ENCODE measurements at regions of chr12 and their contacts with region 1.

Region 1: DNA sequence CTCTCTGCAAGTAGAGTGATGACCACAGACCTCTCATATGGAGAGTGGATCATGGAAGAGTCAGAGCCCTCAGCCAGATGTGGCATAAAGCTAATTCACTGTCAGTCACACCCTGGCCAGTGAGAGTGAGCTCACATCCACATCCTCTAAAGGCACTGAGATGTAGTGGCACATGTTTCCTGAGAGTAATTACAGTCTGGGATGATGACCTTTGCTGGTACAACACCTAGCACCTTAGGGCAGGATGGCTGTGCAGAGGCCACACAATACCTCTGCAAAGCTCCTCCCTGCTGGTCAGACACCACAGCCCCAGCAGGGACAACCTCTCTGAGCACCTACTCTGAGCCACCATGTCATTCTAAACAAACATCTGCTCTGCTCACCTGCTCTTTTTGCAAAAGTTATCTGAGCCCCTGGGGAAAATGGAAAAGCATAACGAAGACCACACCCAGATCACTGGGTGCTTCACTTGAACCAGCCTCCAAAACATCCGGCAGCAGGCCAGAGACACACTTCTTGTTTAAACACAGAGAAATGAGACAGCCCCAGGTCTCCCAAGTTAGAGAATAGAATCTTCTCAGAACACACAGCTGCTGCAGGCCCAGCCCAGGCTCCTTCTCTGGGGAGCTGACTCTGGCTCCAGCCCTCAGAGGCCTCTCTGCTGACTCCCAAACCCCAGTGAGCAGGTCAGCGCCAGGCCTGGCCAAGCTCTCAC is 30.3 kb downstream of the PITPNM2 start:
- DNase-seq: no peak
- ATAC-seq: peak; percentile 79
- H3K4me3 Mint-ChIP-seq: peak overlapping the region; percentile 51
- H3K27ac Mint-ChIP-seq: peak overlapping the region; percentile 88
- H3K4me1 Mint-ChIP-seq: peaks cover 47% of the 10 kb centered on the region
- H3K27me3 Mint-ChIP-seq: no peaks in the 10 kb centered on the region

Region 2: GRCh38 chr12:123089631-123090353 is 30.8 kb before region 1 on chr12:
- POLR2A ChIA-PET with region 1: no interaction called
- DNase-seq: no peak
- ATAC-seq: no peak
- H3K4me3 Mint-ChIP-seq: no peak overlapping the region
- H3K27ac Mint-ChIP-seq: no peak overlapping the region
- H3K4me1 Mint-ChIP-seq: peaks cover 19% of the 10 kb centered on the region
- H3K27me3 Mint-ChIP-seq: no peaks in the 10 kb centered on the region

Region 3: DNA sequence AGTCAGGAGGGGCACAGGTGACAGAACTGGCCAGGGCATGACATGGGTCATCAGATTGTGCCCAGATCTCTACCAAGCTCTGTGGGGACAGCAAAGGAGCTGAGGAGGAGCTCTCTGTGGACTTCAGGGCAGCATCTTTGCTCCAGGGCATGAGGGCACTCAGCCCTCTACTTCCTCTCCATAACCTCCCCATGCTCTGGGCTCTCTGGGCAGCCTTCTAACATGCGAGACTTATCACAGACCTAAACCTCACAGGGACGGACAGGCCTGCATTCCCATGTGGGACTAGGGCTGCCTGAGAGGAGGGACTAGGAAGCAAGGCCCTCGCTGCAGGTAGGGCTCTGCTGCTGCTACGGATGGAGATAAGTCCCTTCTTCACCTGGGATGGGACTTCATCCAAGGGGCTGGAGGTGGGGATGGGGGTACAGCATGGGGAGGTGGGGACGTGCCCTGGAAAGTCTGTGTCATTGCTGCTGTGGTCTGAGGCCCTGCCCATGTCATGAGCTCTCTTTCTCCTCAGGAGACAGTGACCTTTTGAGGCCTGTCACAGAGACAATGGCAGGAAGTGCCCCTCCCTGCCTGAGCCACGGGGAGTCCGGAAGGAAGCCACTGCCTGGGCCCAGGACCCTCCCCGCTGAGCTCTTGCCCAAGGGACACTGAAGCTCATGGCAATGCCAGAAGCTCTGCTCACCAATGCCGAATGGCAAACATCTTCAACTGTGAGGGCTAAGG is 13.8 kb before region 1 on chr12:
- POLR2A ChIA-PET with region 1: interaction called, 35 read pairs
- DNase-seq: peak; percentile 73
- ATAC-seq: peak; percentile 98
- H3K4me3 Mint-ChIP-seq: peak overlapping the region; percentile 71
- H3K27ac Mint-ChIP-seq: peak overlapping the region; percentile 99
- H3K4me1 Mint-ChIP-seq: peaks cover 56% of the 10 kb centered on the region
- H3K27me3 Mint-ChIP-seq: no peaks in the 10 kb centered on the region

Region 4: DNA sequence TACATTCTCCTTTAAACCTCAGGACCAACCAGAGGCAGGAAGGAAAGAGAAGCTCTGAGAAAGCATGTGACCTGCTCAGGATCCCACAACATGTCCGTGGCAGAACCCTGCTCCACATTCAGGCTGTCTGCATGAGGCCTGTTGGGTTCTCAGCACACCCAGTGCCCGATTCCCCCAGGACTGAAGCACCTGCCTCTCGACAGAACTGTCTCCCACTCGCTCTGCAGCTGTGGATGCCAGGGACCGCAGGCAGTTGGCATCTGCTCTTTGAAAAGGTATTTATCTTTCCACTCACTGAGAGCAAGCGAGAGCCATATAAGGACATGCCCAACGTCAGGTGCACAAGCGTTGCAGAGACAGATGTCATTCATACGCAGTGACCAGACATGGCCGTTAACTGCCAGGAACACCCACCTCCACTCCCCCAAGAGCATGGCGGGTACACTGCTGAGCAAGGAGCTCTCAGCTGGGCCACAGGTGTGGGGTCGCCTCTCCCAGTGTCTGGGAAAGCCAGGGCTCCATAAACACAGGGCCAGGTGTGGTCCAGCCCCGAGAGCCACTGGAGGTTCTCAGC is 11.4 kb after region 1 on chr12:
- POLR2A ChIA-PET with region 1: interaction called, 10 read pairs
- DNase-seq: peak; percentile 66
- ATAC-seq: peak; percentile 92
- H3K4me3 Mint-ChIP-seq: peak overlapping the region; percentile 79
- H3K27ac Mint-ChIP-seq: peak overlapping the region; percentile 89
- H3K4me1 Mint-ChIP-seq: peaks cover 26% of the 10 kb centered on the region
- H3K27me3 Mint-ChIP-seq: no peaks in the 10 kb centered on the region

Region 5: DNA sequence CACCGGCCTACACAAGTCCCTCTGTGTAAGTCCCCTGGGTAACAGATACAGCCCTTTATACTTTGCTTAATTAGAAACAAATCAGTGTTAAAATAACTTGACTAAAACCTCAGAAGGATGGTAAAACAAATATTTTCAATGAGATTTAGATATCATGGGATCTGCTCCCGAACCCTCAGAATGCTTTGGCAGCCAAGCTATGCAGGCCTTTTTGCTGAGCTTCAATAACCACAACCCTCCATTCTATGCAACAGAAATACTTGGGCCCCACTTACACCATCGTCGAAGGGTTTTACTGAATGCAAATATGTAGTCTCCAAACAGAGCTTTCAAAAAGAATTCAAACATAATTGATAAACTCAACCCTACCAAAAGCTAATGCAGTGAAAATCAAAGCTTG is 59.6 kb after region 1 on chr12:
- POLR2A ChIA-PET with region 1: no interaction called
- DNase-seq: no peak
- ATAC-seq: no peak
- H3K4me3 Mint-ChIP-seq: no peak overlapping the region
- H3K27ac Mint-ChIP-seq: peak overlapping the region; percentile 8
- H3K4me1 Mint-ChIP-seq: peaks cover 1% of the 10 kb centered on the region
- H3K27me3 Mint-ChIP-seq: no peaks in the 10 kb centered on the region